CD8-positive, alpha-beta T cell (primary cell): ENCODE measurements at regions of chr1 and their contacts with region 1.

Region 1: DNA sequence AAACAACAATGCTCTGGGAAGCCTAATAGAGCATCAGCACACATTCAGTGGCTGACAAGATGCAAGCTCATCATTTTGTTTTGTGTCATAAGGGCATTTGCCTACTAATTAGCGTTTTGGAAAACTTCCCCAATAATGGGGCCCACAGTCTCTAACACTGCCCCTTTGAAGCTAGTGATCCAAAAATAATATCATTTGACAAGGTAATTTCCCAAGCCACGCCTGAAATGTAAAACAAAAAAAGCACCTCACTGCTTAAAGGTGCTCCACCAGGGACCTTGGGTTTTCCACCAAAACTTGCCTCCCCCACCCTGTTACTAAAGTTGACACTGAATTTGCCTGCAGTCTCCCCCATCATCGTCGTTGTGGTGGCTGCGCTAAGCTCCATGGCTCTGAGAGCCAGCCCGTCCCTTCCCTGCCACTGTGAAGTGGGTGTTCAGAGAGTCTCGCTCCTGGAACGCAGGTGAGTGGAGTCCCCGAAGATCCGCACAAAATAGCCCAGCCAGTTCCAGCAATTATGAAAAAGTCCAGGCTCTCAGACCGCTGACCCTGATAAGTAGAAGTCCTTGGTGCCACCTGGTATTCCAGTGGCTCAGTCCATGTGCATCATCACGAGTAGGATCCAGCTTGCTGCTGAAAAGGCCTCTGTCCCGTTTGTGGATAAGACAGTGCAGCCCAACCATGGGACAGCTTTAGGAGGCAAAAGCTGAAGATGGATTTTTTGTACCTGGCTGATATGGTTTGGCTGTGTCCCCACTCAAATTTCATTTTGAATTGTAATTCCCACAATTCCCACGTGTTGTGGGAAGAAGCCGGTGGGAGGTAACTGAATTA is 52.2 kb downstream of the RAB3GAP2 start:
- DNase-seq: no peak
- ATAC-seq: no peak
- H3K4me3 ChIP-seq: no peak overlapping the region
- H3K4me3 Mint-ChIP-seq: no peak overlapping the region
- H3K27ac ChIP-seq: no peak overlapping the region
- H3K27ac Mint-ChIP-seq: no peak overlapping the region
- H3K4me1 ChIP-seq: no peaks in the 10 kb centered on the region
- H3K4me1 Mint-ChIP-seq: peaks cover 63% of the 10 kb centered on the region
- H3K27me3 ChIP-seq: no peaks in the 10 kb centered on the region
- H3K27me3 Mint-ChIP-seq: no peaks in the 10 kb centered on the region
- CTCF ChIP-seq: no peak

Region 2: DNA sequence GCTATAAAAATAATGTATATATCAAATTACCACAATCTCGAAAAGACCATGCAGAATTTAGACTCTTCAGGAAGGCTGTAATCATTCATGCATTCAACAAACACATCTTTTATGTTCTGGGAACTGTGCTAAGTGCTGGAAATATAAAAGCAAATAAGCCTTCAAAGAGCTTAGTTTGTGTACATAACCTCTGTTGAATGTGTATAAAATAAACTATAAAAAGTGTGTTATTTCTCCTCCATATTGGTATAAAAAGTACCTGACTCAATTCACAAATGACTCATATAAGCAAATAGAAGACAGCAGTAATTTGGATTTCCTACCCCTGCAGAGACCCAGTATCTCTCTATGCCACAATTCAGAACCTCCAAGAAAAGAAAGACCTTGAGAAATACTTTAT is 15.4 kb after region 1 on chr1:
- CTCF ChIA-PET with region 1: no interaction called
- POLR2A ChIA-PET with region 1: no interaction called
- intact Hi-C with region 1: no loop called
- DNase-seq: no peak
- ATAC-seq: no peak
- H3K4me3 ChIP-seq: no peak overlapping the region
- H3K4me3 Mint-ChIP-seq: no peak overlapping the region
- H3K27ac ChIP-seq: no peak overlapping the region
- H3K27ac Mint-ChIP-seq: no peak overlapping the region
- H3K4me1 ChIP-seq: no peaks in the 10 kb centered on the region
- H3K4me1 Mint-ChIP-seq: peaks cover 20% of the 10 kb centered on the region
- H3K27me3 ChIP-seq: no peaks in the 10 kb centered on the region
- H3K27me3 Mint-ChIP-seq: no peaks in the 10 kb centered on the region
- CTCF ChIP-seq: no peak

Region 3: GRCh38 chr1:220300442-220301121 is 80.5 kb after region 1 on chr1:
- CTCF ChIA-PET with region 1: no interaction called
- POLR2A ChIA-PET with region 1: no interaction called
- intact Hi-C with region 1: loop called in 1 of 2 experiments (anchors 5 kb)
- DNase-seq: no peak
- ATAC-seq: no peak
- H3K4me3 ChIP-seq: no peak overlapping the region
- H3K4me3 Mint-ChIP-seq: no peak overlapping the region
- H3K27ac ChIP-seq: no peak overlapping the region
- H3K27ac Mint-ChIP-seq: no peak overlapping the region
- H3K4me1 ChIP-seq: no peaks in the 10 kb centered on the region
- H3K4me1 Mint-ChIP-seq: no peaks in the 10 kb centered on the region
- H3K27me3 ChIP-seq: peaks cover 0 to 2% of the 10 kb centered on the region in 2 experiments
- H3K27me3 Mint-ChIP-seq: peaks cover 20% of the 10 kb centered on the region
- CTCF ChIP-seq: no peak

Region 4: DNA sequence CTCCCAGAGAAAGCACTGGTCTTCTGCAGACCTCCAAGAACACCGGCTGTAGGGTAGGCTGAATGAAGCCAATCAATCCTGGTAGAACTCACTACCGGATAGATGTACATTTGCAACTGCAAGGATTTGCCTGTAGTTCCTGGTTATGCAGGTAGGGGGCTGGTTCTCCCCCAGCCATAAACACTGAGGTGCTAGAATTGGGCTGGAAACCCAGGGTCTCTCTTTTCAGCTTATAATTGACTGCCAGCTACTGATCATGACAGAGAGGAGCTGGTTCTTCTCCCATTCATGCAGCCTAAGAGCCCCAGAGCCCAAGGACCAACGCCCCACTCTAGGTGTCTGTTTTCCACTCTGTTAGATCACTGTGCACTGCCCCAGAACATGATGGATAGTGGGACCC is 506.6 kb after region 1 on chr1:
- CTCF ChIA-PET with region 1: no interaction called
- POLR2A ChIA-PET with region 1: no interaction called
- intact Hi-C with region 1: loop called in 1 of 2 experiments (anchors 10 kb)
- DNase-seq: no peak
- ATAC-seq: no peak
- H3K4me3 ChIP-seq: no peak overlapping the region
- H3K4me3 Mint-ChIP-seq: no peak overlapping the region
- H3K27ac ChIP-seq: no peak overlapping the region
- H3K27ac Mint-ChIP-seq: no peak overlapping the region
- H3K4me1 ChIP-seq: no peaks in the 10 kb centered on the region
- H3K4me1 Mint-ChIP-seq: no peaks in the 10 kb centered on the region
- H3K27me3 ChIP-seq: no peaks in the 10 kb centered on the region
- H3K27me3 Mint-ChIP-seq: peaks cover 2% of the 10 kb centered on the region
- CTCF ChIP-seq: no peak